HCT116 (cell line): ENCODE measurements at regions of chr11 and their contacts with region 1.

Region 1: GRCh38 chr11:63146581-63146980 is 2.6 kb upstream of the SLC22A24 start:
- DNase-seq: no peak
- ATAC-seq: no peak
- H3K4me3 ChIP-seq: no peak overlapping the region
- H3K27ac ChIP-seq: no peak overlapping the region
- H3K4me1 ChIP-seq: no peaks in the 10 kb centered on the region
- H3K27me3 ChIP-seq: peaks cover 64% of the 10 kb centered on the region
- CTCF ChIP-seq: no peak
- POLR2A ChIP-seq: no peak
- RAD21 ChIP-seq: no peak

Region 2: GRCh38 chr11:62805076-62805892 is 341.3 kb before region 1 on chr11 and contains the start of gene NXF1:
- CTCF ChIA-PET with region 1: no interaction called
- POLR2A ChIA-PET with region 1: no interaction called
- RAD21 ChIA-PET with region 1: no interaction called
- intact Hi-C with region 1: no loop called
- DNase-seq: peak; percentile 90
- ATAC-seq: peak; percentile 91
- H3K4me3 ChIP-seq: peak within 1 kb of the TSS; percentile 68 to 79
- H3K27ac ChIP-seq: peak within 1 kb of the TSS; percentile 85
- H3K4me1 ChIP-seq: peaks cover 0 to 21% of the 10 kb centered on the region in 2 experiments; a peak in 3 of 4 replicates
- H3K27me3 ChIP-seq: no peaks in the 10 kb centered on the region
- CTCF ChIP-seq: no peak
- POLR2A ChIP-seq: peak; percentile 99
- RAD21 ChIP-seq: no peak
- total RNA-seq, gene NXF1: 55.5 TPM

Region 3: DNA sequence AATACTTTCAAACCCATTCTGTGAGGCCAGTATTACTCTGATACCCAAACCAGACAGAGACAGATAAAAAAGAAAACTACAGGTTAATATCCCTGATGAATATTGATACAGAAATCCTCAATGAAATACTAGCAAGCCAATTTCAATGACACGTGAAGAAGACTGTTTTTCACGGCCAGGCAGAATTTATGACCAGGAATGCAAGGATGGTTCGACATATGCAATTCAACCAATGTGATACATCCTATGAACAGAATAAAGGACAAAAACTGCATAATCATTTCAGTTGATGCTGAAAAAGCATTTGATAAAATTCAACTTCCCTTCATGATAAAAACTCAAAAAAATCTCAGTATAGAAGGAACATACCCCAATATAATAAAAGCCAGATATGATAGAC is 47.0 kb before region 1 on chr11:
- CTCF ChIA-PET with region 1: no interaction called
- POLR2A ChIA-PET with region 1: no interaction called
- RAD21 ChIA-PET with region 1: no interaction called
- intact Hi-C with region 1: loop called (anchors 10 kb)
- DNase-seq: no peak
- ATAC-seq: no peak
- H3K4me3 ChIP-seq: no peak overlapping the region
- H3K27ac ChIP-seq: no peak overlapping the region
- H3K4me1 ChIP-seq: no peaks in the 10 kb centered on the region
- H3K27me3 ChIP-seq: 0 out of 2 replicates have a peak, but pooled peaks cover 14% of the 10 kb centered on the region
- CTCF ChIP-seq: no peak
- POLR2A ChIP-seq: no peak
- RAD21 ChIP-seq: no peak